ENCODE measurements at regions of chr3 and their contacts with region 1.

Region 1: DNA sequence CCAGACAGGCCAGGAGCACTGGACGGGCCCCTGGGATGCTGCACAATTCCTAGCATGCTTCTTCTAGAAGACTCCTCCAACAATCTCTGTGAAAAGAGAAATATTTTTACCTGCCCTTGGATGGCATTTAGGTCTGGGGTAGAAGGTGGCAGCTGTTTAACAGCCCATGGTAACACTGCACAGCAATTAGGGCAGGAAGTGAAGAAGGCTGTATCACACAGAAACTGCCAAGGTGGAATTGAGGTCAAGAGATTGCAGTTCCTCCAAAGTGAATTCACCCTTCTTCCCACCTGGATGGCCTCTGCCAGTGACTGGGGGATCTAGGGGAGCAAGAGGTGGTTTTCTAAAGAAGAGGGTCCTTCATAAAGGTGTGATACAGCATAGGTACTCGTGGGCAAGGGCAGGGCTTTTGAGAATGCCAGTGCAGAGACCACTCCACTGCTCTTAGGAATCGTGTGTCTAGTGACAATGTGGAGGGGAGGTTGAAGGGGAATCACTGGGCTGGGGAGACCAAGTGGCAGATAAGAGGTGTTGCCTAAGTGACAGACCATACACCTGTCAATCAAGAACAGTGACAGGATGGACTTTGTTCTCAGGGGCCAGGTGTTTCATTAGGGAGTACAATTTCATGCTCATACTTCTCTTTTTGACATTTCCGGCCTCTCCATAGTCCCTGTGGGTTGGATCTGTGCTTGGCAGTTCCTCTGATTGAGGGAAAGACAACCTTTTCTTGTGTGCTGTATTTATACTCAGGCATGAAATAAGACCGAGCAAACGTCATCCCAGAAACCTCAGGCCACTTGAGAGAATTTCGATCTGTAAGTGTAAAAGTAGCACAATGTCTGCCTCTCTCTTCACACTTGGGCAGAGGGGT is 83.5 kb upstream of the BCL6 start:
- DNase-seq: peak; percentile 34
- ATAC-seq: peak; percentile 88
- H3K4me3 ChIP-seq: no peak overlapping the region
- H3K27ac ChIP-seq: no peak overlapping the region
- H3K4me1 ChIP-seq: peaks cover 5% of the 10 kb centered on the region; the same call in 1 of the 2 replicates
- H3K27me3 ChIP-seq: 0 out of 4 replicates have a peak, but pooled peaks cover 0 to 4% of the 10 kb centered on the region in 2 experiments
- CTCF ChIP-seq: no peak
- EP300 ChIP-seq: peak; percentile 81; a peak in 2 of 4 replicates
- POLR2A ChIP-seq: no peak
- RAD21 ChIP-seq: no peak

Region 2: GRCh38 chr3:187777331-187777941 is 51.4 kb before region 1 on chr3:
- CTCF ChIA-PET with region 1: interaction called, 3 read pairs
- POLR2A ChIA-PET with region 1: no interaction called
- RAD21 ChIA-PET with region 1: interaction called, 3 read pairs
- SMC1A ChIA-PET with region 1: interaction called, 3 read pairs
- in situ Hi-C with region 1: no loop called
- intact Hi-C with region 1: loop called (anchors 5 kb)
- DNase-seq: peak; percentile 46
- ATAC-seq: peak; percentile 58
- H3K4me3 ChIP-seq: no peak overlapping the region
- H3K27ac ChIP-seq: no peak overlapping the region; the same call in 1 of the 2 replicates
- H3K4me1 ChIP-seq: peaks cover 27% of the 10 kb centered on the region
- H3K27me3 ChIP-seq: no peaks in the 10 kb centered on the region
- CTCF ChIP-seq: no peak
- EP300 ChIP-seq: peak in 1 of 2 experiments; percentile 33; a peak in 1 of 4 replicates
- POLR2A ChIP-seq: no peak
- RAD21 ChIP-seq: no peak

Region 3: DNA sequence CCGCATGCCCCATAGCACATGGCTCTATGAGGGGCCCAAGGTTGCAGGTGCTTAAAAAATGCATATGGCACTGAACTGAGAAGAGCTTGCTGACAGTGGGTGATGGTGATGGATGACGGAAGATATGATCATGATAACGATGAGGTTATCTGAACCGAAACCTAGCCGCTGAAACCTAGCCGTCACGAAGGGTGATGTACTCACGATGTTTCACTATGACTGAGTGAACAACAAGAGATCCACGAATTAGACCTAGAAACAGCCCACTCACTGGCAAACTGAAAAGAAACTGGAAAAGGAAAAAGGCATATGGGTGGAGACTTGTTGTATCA is 25.9 kb before region 1 on chr3:
- CTCF ChIA-PET with region 1: interaction called, 5 read pairs
- POLR2A ChIA-PET with region 1: interaction called, 6 read pairs
- RAD21 ChIA-PET with region 1: interaction called, 5 read pairs
- SMC1A ChIA-PET with region 1: interaction called, 13 read pairs
- in situ Hi-C with region 1: no loop called
- intact Hi-C with region 1: no loop called
- DNase-seq: peak; percentile 64
- ATAC-seq: peak; percentile 81
- H3K4me3 ChIP-seq: no peak overlapping the region
- H3K27ac ChIP-seq: no peak overlapping the region
- H3K4me1 ChIP-seq: peaks cover 33% of the 10 kb centered on the region
- H3K27me3 ChIP-seq: no peaks in the 10 kb centered on the region
- CTCF ChIP-seq: no peak
- EP300 ChIP-seq: peak; percentile 99 to 100
- POLR2A ChIP-seq: no peak
- RAD21 ChIP-seq: no peak

Region 4: GRCh38 chr3:187811585-187812250 is 17.1 kb before region 1 on chr3:
- CTCF ChIA-PET with region 1: interaction called, 3 read pairs
- POLR2A ChIA-PET with region 1: interaction called, 3 read pairs
- RAD21 ChIA-PET with region 1: no interaction called
- SMC1A ChIA-PET with region 1: interaction called, 11 read pairs
- in situ Hi-C with region 1: no loop called
- intact Hi-C with region 1: no loop called
- DNase-seq: no peak
- ATAC-seq: no peak; the same call in 2 of the 3 replicates
- H3K4me3 ChIP-seq: no peak overlapping the region
- H3K27ac ChIP-seq: no peak overlapping the region
- H3K4me1 ChIP-seq: no peaks in the 10 kb centered on the region
- H3K27me3 ChIP-seq: peaks cover 0 to 4% of the 10 kb centered on the region in 2 experiments; a peak in 1 of 4 replicates
- CTCF ChIP-seq: no peak
- EP300 ChIP-seq: no peak
- POLR2A ChIP-seq: no peak
- RAD21 ChIP-seq: no peak

Region 5: DNA sequence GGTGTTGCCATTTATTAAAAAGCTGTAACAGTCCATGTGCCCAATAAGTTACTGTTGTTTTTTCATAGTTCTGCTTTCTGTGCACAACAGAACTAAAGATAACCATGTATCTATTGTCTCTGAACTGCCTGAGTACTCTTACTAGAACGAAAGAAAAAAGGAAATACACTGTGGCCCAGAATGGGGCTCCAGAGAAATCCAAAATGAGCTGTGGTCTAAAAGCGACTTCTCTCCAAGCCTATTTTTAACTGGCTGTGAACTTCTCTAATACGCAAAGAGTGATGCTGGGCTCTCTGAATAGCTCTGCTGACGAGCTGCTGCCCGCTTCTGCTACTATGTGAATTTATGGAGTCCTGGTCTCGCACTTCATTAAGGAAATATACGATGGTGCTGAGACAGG is 269.0 kb after region 1 on chr3:
- CTCF ChIA-PET with region 1: no interaction called
- POLR2A ChIA-PET with region 1: no interaction called
- RAD21 ChIA-PET with region 1: no interaction called
- SMC1A ChIA-PET with region 1: no interaction called
- in situ Hi-C with region 1: no loop called
- intact Hi-C with region 1: no loop called
- DNase-seq: no peak
- ATAC-seq: no peak
- H3K4me3 ChIP-seq: no peak overlapping the region
- H3K27ac ChIP-seq: no peak overlapping the region
- H3K4me1 ChIP-seq: no peaks in the 10 kb centered on the region
- H3K27me3 ChIP-seq: peaks cover 0 to 8% of the 10 kb centered on the region in 2 experiments; a peak in 3 of 4 replicates
- CTCF ChIP-seq: no peak
- EP300 ChIP-seq: no peak
- POLR2A ChIP-seq: no peak
- RAD21 ChIP-seq: no peak